ENCODE measurements at regions of chr18 and their contacts with region 1.

Region 1: GRCh38 chr18:45221363-45221762 is 393.9 kb upstream of the SLC14A2 start:
- DNase-seq: no peak
- ATAC-seq: no peak
- H3K4me3 ChIP-seq: no peak overlapping the region
- H3K4me1 ChIP-seq: no peaks in the 10 kb centered on the region
- CTCF ChIP-seq: no peak

Region 2: GRCh38 chr18:44579028-44579702 is 642.2 kb before region 1 on chr18:
- intact Hi-C with region 1: loop called in 1 of 2 experiments (anchors 5 kb)
- DNase-seq: no peak
- ATAC-seq: no peak
- H3K4me3 ChIP-seq: no peak overlapping the region
- H3K4me1 ChIP-seq: no peaks in the 10 kb centered on the region
- CTCF ChIP-seq: peak; percentile 32

Region 3: GRCh38 chr18:45026162-45026561 is 195.2 kb before region 1 on chr18:
- intact Hi-C with region 1: no loop called
- DNase-seq: no peak
- ATAC-seq: no peak
- H3K4me3 ChIP-seq: no peak overlapping the region
- H3K4me1 ChIP-seq: no peaks in the 10 kb centered on the region
- CTCF ChIP-seq: no peak

Region 4: GRCh38 chr18:45260125-45260524 is 38.8 kb after region 1 on chr18:
- intact Hi-C with region 1: no loop called
- DNase-seq: no peak
- ATAC-seq: no peak
- H3K4me3 ChIP-seq: no peak overlapping the region
- H3K4me1 ChIP-seq: no peaks in the 10 kb centered on the region
- CTCF ChIP-seq: no peak

Region 5: GRCh38 chr18:45416168-45416567 is 194.8 kb after region 1 on chr18:
- intact Hi-C with region 1: no loop called
- DNase-seq: peak in 1 of 3 donors; percentile 62
- ATAC-seq: peak; percentile 85
- H3K4me3 ChIP-seq: no peak overlapping the region
- H3K4me1 ChIP-seq: no peaks in the 10 kb centered on the region
- CTCF ChIP-seq: no peak